ENCODE measurements at regions of chr16 and their contacts with region 1.

Region 1: GRCh38 chr16:14486520-14487303 is 143.3 kb downstream of the PARN start:
- DNase-seq: peak; percentile 77 to 80
- ATAC-seq: peak; percentile 81
- H3K4me3 ChIP-seq: peak overlapping the region; percentile 49 to 59 (median 54)
- H3K27ac ChIP-seq: peak overlapping the region; percentile 81 to 92 (median 86)
- H3K4me1 ChIP-seq: peaks cover 34 to 47% of the 10 kb centered on the region in 2 donors
- H3K27me3 ChIP-seq: no peaks in the 10 kb centered on the region
- CTCF ChIP-seq: peak in 3 of 5 experiments; percentile 6 to 21 (median 6)
- POLR2A ChIP-seq: peak; percentile 13 to 39

Region 2: GRCh38 chr16:14436401-14436955 is 50.2 kb before region 1 on chr16:
- in situ Hi-C with region 1: no loop called
- intact Hi-C with region 1: loop called (anchors 5 kb)
- DNase-seq: peak; percentile 78 to 92
- ATAC-seq: peak; percentile 92 to 97
- H3K4me3 ChIP-seq: peak overlapping the region; percentile 22 to 40 (median 32)
- H3K27ac ChIP-seq: peak overlapping the region; percentile 77 to 85 (median 82)
- H3K4me1 ChIP-seq: peaks cover 8 to 17% of the 10 kb centered on the region in 2 donors
- H3K27me3 ChIP-seq: no peaks in the 10 kb centered on the region
- CTCF ChIP-seq: no peak
- POLR2A ChIP-seq: peak in 1 of 2 donors; percentile 17

Region 3: DNA sequence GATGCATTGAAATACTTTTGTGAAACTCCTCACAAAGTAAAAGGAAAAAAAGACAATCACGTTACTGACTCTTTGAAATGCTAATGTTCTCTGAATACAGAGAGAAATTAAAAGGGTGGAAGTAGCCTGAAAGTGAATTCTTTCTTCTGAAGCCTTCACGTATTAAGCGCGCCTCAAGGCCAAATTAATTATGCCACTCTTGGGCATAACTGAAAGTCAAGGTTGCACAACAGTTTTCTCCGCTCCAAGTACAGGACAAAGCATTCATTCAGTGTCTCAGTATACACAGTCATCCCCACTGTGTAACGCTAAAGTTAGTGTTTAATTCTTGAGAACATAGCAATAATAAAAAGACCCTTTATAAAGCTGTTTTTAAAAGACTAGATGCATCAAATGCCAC is 121.9 kb after region 1 on chr16:
- in situ Hi-C with region 1: no loop called
- intact Hi-C with region 1: no loop called
- DNase-seq: no peak
- ATAC-seq: no peak
- H3K4me3 ChIP-seq: no peak overlapping the region
- H3K27ac ChIP-seq: no peak overlapping the region
- H3K4me1 ChIP-seq: no peaks in the 10 kb centered on the region
- H3K27me3 ChIP-seq: no peaks in the 10 kb centered on the region
- CTCF ChIP-seq: no peak
- POLR2A ChIP-seq: no peak